Posterior vena cava (tissue), 2 donors: ENCODE measurements at regions of chr1 and their contacts with region 1.

Region 1: DNA sequence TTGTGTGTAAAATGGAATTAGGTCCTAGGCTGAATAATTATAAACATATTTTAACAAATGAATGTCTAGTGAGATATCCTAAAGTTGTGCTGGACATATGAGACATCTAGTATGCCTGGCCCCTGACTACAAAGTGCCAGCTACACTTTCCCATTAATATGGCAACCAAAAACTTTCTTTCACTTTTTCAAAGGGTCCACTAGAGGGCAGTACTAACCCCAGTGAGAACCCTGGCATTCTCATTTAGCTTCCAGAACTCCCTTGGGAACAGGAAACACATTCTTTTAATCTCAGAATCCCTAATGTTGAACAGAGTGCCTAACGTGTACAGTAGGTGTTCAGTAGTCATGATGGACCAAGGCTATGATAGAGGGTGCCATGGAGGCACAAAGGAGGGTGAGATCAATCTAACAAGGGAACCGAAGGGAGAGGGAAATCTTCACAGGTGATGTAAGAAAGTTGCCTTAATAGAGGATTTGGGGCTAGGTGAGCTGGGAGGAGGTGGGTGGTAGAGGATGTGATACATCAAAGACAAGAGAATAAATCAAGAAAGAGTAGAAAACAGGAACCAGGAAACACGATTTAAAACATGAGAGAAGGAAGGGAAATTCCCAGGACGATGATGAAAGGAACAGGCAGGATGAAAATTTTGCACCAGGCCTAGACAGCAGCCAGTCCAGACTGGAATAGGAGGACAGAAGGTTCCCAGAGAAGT is 41.6 kb downstream of the NSL1 start:
- DNase-seq: no peak

Region 2: DNA sequence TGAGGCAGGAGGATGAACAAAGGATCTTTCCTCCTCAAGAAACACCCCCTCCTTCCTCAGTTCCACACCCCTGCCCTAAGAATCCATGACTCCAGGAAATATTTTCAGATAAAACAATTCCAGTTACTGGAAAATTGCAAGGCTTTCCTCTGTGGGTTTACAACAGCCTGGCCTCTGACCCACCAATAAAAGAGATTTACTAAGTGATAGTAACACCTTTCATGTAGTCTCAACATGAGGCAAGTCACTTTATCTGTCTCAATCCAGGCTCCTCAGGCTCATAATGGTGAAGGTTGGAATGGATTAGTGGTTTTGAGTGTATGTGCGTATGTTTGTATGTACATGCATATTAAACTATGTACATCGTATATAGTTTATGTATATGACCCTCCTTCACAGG is 536.2 kb before region 1 on chr1:
- intact Hi-C with region 1: loop called in 1 of 2 experiments (anchors 5 kb)
- DNase-seq: no peak

Region 3: GRCh38 chr1:212586206-212587015 is 163.6 kb before region 1 on chr1:
- intact Hi-C with region 1: no loop called
- DNase-seq: no peak

Region 4: DNA sequence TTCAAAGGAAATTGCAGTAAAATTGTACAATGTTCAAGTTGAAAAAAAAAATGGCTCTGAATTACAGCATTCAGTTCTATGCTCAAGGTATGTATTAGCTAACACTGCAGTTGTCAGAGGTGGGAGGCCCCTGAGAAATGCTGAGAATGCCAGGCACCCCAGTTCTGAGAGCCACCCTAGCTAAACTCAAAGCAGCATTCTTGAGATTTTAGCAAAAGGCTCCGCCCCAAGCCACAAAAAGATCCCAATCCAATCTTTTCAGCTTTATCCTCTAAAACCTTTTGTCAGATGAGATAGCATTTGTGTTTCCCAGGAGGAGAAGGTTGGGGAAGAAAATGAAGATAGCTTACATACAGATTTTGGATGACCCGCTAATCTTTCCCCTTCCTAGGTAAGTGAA is 1599.8 kb after region 1 on chr1:
- intact Hi-C with region 1: loop called in 1 of 2 experiments (anchors 5 kb)
- DNase-seq: no peak